ENCODE measurements at regions of chr11 and their contacts with region 1.

Region 1: GRCh38 chr11:94342250-94342649 is 37.9 kb downstream of the IZUMO1R start:
- DNase-seq: no peak
- H3K4me3 ChIP-seq: no peak overlapping the region
- H3K27ac ChIP-seq: no peak overlapping the region
- H3K4me1 ChIP-seq: no peaks in the 10 kb centered on the region
- H3K27me3 ChIP-seq: no peaks in the 10 kb centered on the region
- CTCF ChIP-seq: no peak
- POLR2A ChIP-seq: no peak

Region 2: GRCh38 chr11:94297985-94298576 is 44.2 kb before region 1 on chr11:
- CTCF ChIA-PET with region 1: no interaction called
- POLR2A ChIA-PET with region 1: interaction called, 12 read pairs
- dilution Hi-C with region 1: no loop called
- intact Hi-C with region 1: no loop called
- DNase-seq: no peak
- H3K4me3 ChIP-seq: no peak overlapping the region
- H3K27ac ChIP-seq: no peak overlapping the region
- H3K4me1 ChIP-seq: no peaks in the 10 kb centered on the region
- H3K27me3 ChIP-seq: no peaks in the 10 kb centered on the region
- CTCF ChIP-seq: no peak
- POLR2A ChIP-seq: no peak

Measured in endothelial cell of umbilical vein (primary cell).